OCI-LY7 (cell line): ENCODE measurements at regions of chr17 and their contacts with region 1.

Region 1: DNA sequence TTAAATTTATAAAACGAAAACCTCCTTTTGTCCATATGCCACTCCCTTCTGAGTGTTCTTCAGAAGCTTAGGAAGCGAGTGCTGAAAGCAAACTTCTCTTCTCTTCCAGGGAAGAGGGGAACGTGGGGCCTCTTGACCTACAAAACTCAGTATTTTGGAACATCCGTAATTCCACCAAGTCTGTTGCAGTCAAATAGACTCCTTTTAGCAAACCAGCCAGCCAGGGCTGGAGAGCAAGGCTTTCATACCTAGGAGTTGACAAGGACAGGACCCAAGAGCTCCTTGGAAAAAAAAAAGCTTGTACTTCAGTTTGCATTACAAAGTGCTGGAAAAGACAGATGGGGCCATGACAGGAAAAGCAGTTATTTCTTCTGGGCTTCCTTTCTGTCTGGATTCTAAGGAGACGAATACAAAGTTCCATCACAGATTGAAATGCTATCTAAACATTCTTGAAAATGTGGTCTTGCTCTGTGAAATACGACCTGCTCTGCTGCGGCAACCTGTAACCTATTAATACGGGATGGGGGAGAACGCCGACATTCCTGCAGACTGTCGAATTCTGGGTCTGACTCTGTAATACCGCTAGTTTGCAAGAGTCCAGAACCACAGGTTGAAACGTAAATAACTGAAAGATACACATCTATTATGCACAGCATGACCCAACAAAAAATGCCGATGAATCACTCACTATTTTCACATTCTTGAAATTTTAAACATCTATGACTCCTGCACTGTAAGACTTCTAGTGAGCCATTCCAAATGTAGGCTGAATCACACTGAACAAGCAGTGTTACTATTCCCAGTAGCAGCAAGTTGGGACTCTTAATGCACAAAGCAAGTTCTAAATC is 20.6 kb downstream of the VPS53 start:
- DNase-seq: no peak
- H3K4me3 ChIP-seq: no peak overlapping the region
- H3K27ac ChIP-seq: no peak overlapping the region
- H3K4me1 ChIP-seq: no peaks in the 10 kb centered on the region
- CTCF ChIP-seq: no peak

Region 2: GRCh38 chr17:393806-394717 is 300.0 kb before region 1 on chr17:
- CTCF ChIA-PET with region 1: no interaction called
- POLR2A ChIA-PET with region 1: no interaction called
- intact Hi-C with region 1: loop called (anchors 10 kb)
- DNase-seq: no peak
- H3K4me3 ChIP-seq: no peak overlapping the region
- H3K27ac ChIP-seq: no peak overlapping the region
- H3K4me1 ChIP-seq: no peaks in the 10 kb centered on the region
- CTCF ChIP-seq: no peak